ENCODE measurements at regions of chr9 and their contacts with region 1.

Region 1: DNA sequence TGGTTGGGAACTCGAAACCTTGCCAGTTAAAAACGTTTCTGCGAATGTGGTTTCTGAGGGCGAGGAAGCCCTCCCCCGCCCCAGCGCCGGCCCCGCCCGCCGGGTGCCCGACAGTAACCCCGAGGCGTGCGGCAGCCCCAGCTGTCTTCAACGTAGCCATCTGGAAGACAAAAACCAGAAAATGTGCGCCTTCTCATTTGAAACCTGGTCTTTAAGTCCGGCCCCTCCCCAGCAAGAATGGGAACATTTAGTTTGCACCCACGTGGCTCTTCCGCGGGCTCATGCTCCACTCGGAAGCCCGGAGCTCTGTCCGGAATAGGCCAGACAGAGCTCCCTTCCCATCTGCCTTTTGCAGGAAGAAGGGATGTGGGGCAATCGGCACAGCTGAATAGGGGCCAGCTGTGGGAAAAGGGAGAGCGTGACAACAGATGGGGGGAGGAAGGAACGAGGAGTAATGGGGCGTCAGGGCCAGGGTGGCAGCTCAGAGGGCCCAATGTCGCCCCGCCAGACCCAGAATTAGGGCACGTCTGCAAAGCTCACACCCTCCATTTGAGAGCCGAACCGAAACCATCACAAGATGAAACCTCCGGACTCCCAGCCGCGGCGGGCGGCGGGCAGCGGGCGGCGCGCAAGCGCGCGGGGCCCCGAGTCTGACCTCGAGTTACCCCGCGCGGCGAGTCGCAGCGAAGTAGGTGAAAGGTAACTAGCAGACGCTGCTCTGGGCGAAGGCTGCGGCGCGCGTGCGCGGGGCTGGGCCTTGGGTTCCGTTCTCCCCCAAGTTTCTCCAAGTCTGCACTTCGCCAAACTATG is 63.4 kb upstream of the ABCA1 start:
- DNase-seq: peak; percentile 82
- ATAC-seq: peak; percentile 85
- H3K4me3 ChIP-seq: peak overlapping the region; percentile 65
- H3K27ac ChIP-seq: peak overlapping the region; percentile 98
- H3K4me1 ChIP-seq: peaks cover 25% of the 10 kb centered on the region
- H3K27me3 ChIP-seq: no peaks in the 10 kb centered on the region
- CTCF ChIP-seq: no peak
- POLR2A ChIP-seq: peak; percentile 37; the same call in 1 of the 2 replicates
- RAD21 ChIP-seq: peak; percentile 27

Region 2: DNA sequence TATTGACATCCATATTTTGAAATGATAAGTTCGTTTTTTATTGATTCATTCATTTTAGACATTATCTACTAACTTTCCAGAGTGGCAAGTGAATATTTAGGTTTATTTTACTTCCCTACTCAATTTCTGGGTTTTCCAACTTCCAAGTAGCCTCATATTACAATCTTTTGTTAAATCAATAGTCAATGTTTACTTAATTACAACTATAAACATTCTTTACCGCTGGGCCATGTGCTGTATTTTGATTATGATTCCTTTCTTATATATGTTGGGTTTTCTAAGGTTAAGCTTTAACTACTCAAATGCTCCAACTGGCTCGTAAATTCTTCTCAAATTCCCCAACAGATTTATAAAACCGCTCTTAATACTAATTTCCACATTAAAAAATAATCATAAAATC is 46.7 kb after region 1 on chr9:
- CTCF ChIA-PET with region 1: no interaction called
- POLR2A ChIA-PET with region 1: no interaction called
- dilution Hi-C with region 1: no loop called
- in situ Hi-C with region 1: no loop called
- intact Hi-C with region 1: no loop called
- DNase-seq: peak; percentile 39
- ATAC-seq: no peak; the same call in 1 of the 2 replicates
- H3K4me3 ChIP-seq: no peak overlapping the region
- H3K27ac ChIP-seq: no peak overlapping the region
- H3K4me1 ChIP-seq: 0 out of 2 replicates have a peak, but pooled peaks cover 1% of the 10 kb centered on the region
- H3K27me3 ChIP-seq: no peaks in the 10 kb centered on the region
- CTCF ChIP-seq: no peak
- POLR2A ChIP-seq: no peak
- RAD21 ChIP-seq: no peak

Region 3: DNA sequence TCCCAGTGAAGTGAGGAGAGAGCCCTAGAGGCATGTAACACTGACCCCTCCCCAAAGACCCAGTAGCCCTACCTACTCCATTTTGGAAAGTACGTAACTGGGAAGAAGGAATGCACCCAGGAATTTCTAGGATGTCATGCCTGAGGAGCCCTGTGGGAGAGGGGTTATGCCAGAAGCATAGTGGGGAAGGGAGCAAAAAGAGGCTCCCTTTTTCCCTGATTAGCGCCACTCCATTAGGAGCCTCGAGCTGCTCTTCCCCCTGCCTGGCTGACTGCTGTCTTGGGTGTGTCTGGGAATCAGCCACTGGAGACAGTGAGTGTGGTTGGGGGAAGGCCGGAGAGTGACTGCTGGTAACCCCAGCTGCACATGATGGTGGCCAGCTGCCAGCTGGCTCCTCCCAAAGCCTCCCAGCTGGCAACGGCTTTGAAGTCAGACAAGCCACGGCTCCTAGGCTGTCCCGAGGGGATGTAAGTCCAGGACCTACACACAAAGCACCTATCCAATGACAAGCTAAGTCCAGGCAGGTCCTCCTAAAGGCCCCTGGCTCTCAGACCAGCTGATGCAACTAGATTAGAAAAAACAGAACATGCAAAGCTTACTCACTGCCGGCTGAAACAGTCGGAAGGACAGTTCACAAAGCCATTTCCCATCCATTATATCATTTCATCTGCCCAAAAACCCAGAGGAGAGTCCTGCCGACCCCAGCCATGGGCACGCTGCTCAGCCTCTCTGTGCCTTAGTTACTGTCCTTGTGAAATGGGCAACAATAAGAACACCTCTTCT is 73.2 kb after region 1 on chr9:
- CTCF ChIA-PET with region 1: interaction called, 4 read pairs
- POLR2A ChIA-PET with region 1: no interaction called
- dilution Hi-C with region 1: no loop called
- in situ Hi-C with region 1: no loop called
- intact Hi-C with region 1: loop called (anchors 2 kb)
- DNase-seq: peak; percentile 97
- ATAC-seq: peak; percentile 86
- H3K4me3 ChIP-seq: no peak overlapping the region
- H3K27ac ChIP-seq: peak overlapping the region; percentile 97
- H3K4me1 ChIP-seq: peaks cover 21% of the 10 kb centered on the region
- H3K27me3 ChIP-seq: no peaks in the 10 kb centered on the region
- CTCF ChIP-seq: no peak
- POLR2A ChIP-seq: peak; percentile 22
- RAD21 ChIP-seq: peak; percentile 25

Region 4: GRCh38 chr9:105127863-105128220 is 136.5 kb after region 1 on chr9:
- CTCF ChIA-PET with region 1: no interaction called
- POLR2A ChIA-PET with region 1: no interaction called
- dilution Hi-C with region 1: no loop called
- in situ Hi-C with region 1: loop called (anchors 25 kb)
- intact Hi-C with region 1: loop called (anchors 5 kb)
- DNase-seq: peak; percentile 25
- ATAC-seq: no peak
- H3K4me3 ChIP-seq: no peak overlapping the region
- H3K27ac ChIP-seq: no peak overlapping the region
- H3K4me1 ChIP-seq: peaks cover 12% of the 10 kb centered on the region
- H3K27me3 ChIP-seq: no peaks in the 10 kb centered on the region
- CTCF ChIP-seq: no peak
- POLR2A ChIP-seq: no peak
- RAD21 ChIP-seq: no peak

Region 5: DNA sequence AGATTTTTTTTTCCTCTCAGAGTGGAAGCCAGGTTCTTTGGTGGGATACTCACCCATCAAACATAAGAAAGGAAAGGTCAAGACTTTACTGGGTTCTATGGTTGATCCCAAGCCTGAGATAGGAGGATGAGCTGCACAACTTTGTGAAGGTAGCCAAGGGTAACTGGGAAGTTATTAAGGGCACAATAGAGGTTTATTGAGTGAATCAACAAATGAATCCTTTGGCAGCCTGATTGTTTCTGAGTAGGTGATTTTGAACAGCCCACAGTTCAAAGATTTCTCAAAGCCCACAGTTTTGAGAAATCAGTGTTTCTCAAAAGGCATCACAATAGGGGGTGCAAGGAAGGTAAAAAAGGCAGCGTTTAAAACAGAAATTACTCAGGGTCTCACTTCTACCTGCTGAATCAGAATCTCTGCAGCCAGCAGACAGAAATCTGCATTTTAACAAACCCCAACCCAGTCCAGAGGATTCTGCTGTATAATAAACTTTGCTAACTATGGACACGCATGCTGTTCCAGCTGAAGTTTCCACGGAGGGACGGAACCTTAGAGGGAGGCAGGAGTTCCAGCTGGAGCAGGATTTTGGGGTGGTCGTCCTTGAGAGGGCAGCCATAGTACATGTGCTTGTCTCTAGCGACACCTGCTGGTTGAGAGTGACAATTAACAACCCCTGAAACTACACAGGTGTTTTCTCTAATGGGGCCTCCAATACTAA is 423.8 kb after region 1 on chr9:
- CTCF ChIA-PET with region 1: no interaction called
- POLR2A ChIA-PET with region 1: no interaction called
- dilution Hi-C with region 1: no loop called
- in situ Hi-C with region 1: no loop called
- intact Hi-C with region 1: loop called (anchors 10 kb)
- DNase-seq: peak; percentile 55
- ATAC-seq: peak; percentile 70
- H3K4me3 ChIP-seq: no peak overlapping the region
- H3K27ac ChIP-seq: no peak overlapping the region
- H3K4me1 ChIP-seq: peaks cover 6% of the 10 kb centered on the region
- H3K27me3 ChIP-seq: no peaks in the 10 kb centered on the region
- CTCF ChIP-seq: peak; percentile 77
- POLR2A ChIP-seq: no peak
- RAD21 ChIP-seq: peak; percentile 97

Measured in IMR-90 (cell line).